Mammary epithelial cell (primary cell): ENCODE measurements at regions of chr17 and their contacts with region 1.

Region 1: DNA sequence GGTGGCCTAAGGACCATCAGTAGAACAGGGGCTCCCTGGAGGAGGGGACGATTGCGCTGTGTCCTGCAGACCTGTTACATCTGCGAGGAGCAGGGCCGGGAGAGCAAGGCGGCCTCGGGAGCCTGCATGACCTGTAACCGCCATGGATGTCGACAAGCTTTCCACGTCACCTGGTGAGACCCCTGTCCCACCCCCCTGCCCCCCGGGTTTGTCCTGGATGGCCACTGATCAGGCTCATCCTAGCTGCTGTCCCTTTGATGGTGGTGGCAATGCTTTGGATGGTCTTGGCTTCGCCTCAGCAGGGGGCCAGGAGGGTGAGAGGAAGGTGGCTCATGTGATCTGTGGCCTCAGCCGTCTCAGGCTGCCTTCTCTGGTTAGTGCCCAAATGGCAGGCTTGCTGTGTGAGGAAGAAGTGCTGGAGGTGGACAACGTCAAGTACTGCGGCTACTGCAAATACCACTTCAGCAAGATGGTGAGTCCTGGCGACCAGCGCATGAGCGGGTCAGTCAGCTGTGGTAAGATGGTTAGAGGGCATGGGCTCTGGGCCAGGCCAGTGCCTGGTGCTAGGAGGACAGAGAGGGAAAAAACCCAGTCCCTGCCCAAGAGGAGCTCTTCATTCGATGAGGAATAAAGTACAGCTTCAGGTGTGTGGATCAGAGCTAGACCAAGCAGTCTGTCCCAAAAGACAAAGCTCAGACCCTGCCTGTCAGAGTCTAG is 4.2 kb downstream of the MLLT6 start:
- DNase-seq: no peak
- H3K4me3 ChIP-seq: no peak overlapping the region
- H3K27ac ChIP-seq: no peak overlapping the region
- H3K4me1 ChIP-seq: peaks cover 11% of the 10 kb centered on the region
- H3K27me3 ChIP-seq: no peaks in the 10 kb centered on the region
- CTCF ChIP-seq: no peak

Region 2: DNA sequence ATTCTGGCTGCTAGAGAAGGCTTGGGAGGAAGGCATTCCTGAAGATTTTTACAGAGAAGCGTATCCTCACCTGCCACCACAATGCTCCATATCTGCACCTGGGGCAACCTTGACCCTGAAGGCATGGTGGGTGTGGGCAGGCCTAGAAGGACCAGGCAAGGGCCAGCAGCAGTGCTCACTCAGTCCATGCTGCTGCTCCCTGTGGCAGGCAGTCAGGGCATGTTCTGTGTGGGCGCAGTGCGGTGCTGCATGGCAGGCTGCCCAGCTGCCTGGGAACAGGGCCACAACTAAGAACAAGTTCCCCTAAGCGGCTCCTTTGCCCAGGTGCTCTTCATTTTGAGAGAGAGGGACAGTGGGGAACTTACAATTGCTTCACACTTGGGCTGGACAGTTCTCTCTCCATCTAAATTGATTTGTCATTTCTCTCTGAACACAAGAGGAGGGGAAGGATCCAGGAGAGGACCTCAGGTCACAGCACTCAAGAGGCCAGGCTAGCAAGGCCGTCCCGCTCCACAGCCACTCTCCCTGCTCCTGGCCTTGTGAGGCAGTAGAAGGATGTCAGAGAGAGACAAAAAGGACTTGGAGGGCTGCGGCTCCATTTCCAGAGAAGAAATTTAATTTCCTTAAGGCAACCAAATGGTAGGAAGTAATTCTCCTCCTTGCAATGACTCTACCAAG is 1601.7 kb before region 1 on chr17:
- CTCF ChIA-PET with region 1: interaction called, 21 read pairs
- dilution Hi-C with region 1: no loop called
- in situ Hi-C with region 1: no loop called
- intact Hi-C with region 1: no loop called
- DNase-seq: peak; percentile 76
- H3K4me3 ChIP-seq: no peak overlapping the region
- H3K27ac ChIP-seq: no peak overlapping the region
- H3K4me1 ChIP-seq: peaks cover 13% of the 10 kb centered on the region
- H3K27me3 ChIP-seq: no peaks in the 10 kb centered on the region
- CTCF ChIP-seq: no peak